ENCODE measurements at regions of chr14 and their contacts with region 1.

Region 1: DNA sequence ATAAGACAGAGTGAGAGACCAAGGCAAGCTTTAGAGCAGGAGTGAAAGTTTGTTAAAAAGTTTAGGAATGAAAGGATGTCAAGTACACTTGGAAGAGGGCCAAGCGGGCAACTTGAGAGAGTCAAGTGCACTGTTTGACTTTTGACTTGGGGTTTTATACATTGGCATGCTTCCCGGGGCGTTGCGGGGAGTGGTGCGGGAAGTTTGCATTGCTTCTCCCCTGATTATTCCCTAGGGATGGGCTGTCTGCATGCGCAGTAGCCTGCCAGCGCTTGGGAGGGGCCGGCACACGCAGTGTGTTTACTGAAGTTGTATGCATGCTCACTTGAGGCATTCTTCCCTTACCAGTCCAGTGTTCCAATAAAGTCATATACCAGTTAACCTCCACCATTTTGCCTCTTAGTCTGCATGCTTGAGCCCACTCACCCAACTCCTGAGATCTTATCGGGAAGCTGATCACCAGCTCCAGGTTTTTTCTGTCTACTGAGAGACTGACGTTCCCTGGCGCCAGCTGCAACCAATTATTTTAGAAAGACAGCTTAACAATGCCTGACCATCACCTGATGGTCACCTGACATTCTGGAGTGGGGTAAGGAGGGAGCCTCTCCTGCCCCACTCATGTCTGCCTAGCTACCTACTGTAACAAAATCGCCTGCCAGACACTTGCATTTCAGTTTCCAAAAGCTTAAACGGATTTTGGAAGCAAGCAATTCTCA is 53.2 kb downstream of the DACT1 start:
- DNase-seq: no peak
- H3K4me3 ChIP-seq: no peak overlapping the region
- H3K27ac ChIP-seq: no peak overlapping the region
- H3K4me1 ChIP-seq: peaks cover 6% of the 10 kb centered on the region
- H3K27me3 ChIP-seq: no peaks in the 10 kb centered on the region
- CTCF ChIP-seq: no peak
- POLR2A ChIP-seq: no peak

Region 2: GRCh38 chr14:58702441-58703160 is 11.6 kb after region 1 on chr14:
- intact Hi-C with region 1: loop called (anchors 1 kb)
- DNase-seq: no peak
- H3K4me3 ChIP-seq: no peak overlapping the region
- H3K27ac ChIP-seq: no peak overlapping the region
- H3K4me1 ChIP-seq: no peaks in the 10 kb centered on the region
- H3K27me3 ChIP-seq: no peaks in the 10 kb centered on the region
- CTCF ChIP-seq: no peak
- POLR2A ChIP-seq: no peak